Posterior cingulate gyrus (tissue), 11 donors: ENCODE measurements at regions of chr4 and their contacts with region 1.

Region 1: GRCh38 chr4:185534866-185535611 is at the start of gene PDLIM3:
- DNase-seq: peak; percentile 20 to 92 (median 45)

Region 2: GRCh38 chr4:185254434-185254833 is 280.6 kb before region 1 on chr4:
- intact Hi-C with region 1: no loop called
- DNase-seq: no peak

Region 3: DNA sequence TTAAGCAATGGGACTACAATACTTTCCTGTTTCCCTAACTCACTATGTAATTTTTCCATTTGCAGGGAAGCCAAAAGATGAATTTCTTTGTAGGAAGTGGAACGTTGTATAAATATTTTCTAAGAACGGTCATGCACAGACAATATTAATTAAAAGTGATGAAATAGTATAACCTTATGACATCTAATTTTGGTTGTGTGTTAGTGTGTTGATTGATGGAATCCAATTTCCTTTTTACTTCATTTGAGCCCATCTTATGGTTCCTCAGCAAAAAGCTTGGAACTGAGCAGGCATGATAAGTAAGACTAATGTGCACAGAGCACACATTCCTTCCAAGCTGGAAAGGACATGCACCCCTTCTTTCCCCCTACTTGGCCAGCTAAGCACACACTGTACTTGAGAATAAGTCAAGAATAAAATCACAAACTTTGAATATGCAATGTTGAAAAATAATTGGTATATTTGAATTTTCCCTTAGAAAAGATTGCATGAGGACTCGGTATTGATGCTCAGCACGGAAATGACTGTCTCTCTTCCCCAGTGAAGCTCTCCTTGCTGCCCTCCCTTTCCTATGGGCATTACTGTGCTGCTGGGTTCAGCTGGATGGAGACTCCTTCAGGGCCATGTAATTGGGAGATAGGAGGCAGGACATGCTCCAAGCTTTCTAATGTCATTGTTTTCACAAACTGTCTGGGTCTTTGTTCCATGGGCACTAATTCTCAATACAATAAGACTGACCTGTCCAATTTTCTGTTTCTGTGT is 19.5 kb after region 1 on chr4:
- intact Hi-C with region 1: no loop called
- DNase-seq: no peak

Region 4: GRCh38 chr4:185566972-185567371 is 31.9 kb after region 1 on chr4:
- intact Hi-C with region 1: loop called (anchors 5 kb)
- DNase-seq: no peak

Region 5: DNA sequence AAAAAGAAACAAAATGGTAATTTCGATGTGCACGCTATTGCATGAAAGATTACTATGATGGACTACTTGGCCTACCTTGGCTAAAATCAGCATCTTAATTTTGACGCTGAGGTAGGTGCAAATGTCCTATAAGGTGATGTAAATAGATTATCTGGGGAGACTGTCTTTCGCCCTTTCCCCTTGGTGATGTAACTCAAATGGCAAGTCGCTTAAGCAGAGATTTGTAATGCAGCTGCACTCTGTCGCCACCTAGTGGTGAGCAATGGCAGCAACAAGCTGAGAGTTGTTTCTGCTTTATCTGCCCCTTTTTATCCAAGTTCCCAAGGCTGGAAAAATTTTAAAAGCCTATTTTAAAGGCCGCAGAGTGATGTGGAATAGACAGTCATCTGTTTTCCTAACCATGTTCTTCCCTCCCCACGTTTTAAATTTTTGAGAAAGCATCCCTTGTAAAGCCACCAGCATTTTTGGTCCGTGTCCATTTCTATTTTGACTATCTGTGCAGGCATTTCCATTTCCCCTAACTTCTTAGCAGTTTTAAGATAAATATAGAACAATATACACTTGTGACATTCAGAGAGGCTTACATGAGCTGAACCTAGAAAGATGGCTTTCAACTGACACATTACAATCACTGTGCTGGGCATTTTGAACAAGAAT is 62.6 kb after region 1 on chr4:
- intact Hi-C with region 1: loop called (anchors 10 kb)
- DNase-seq: peak; percentile 43 to 95 (median 79)

Region 6: DNA sequence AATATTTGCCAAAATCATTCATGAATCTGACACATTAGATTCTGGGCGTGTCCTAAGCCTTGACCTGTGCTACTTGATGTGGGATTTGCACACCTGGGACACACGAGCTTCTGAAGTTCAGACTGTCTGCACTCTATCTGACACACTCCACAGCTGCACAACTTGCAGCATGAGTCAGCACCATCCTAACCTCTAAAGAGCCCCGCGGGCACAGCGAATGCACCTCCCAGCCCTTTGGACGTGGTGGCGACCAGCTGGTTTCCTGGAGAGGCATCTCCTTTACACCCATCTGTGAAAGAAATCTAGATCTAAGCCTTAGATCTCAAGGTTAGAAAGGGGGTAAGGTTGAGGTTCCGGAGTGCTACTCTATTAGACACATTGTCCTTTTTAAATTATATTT is 207.7 kb after region 1 on chr4:
- intact Hi-C with region 1: no loop called
- DNase-seq: no peak